Transverse colon (tissue), 4 donors: ENCODE measurements at regions of chr1 and their contacts with region 1.

Region 1: GRCh38 chr1:110319332-110320152 is 19.6 kb upstream of the RBM15 start:
- DNase-seq: no peak
- H3K4me3 ChIP-seq: no peak overlapping the region
- H3K27ac ChIP-seq: no peak overlapping the region
- H3K4me1 ChIP-seq: peaks cover 0 to 8% (median 3%) of the 10 kb centered on the region in 4 donors
- H3K27me3 ChIP-seq: no peaks in the 10 kb centered on the region
- CTCF ChIP-seq: no peak
- EP300 ChIP-seq: no peak
- POLR2A ChIP-seq: no peak

Region 2: GRCh38 chr1:110203021-110203661 is 116.4 kb before region 1 on chr1:
- in situ Hi-C with region 1: loop called in 3 of 4 experiments (anchors 5 kb)
- intact Hi-C with region 1: no loop called
- DNase-seq: peak; percentile 74
- H3K4me3 ChIP-seq: no peak overlapping the region
- H3K27ac ChIP-seq: peak overlapping the region in 3 of 4 donors; percentile 27 to 66 (median 51)
- H3K4me1 ChIP-seq: peaks cover 0 to 12% (median 0%) of the 10 kb centered on the region in 4 donors
- H3K27me3 ChIP-seq: no peaks in the 10 kb centered on the region
- CTCF ChIP-seq: peak; percentile 84 to 94 (median 89)
- EP300 ChIP-seq: no peak
- POLR2A ChIP-seq: no peak

Region 3: GRCh38 chr1:110272045-110272444 is 47.5 kb before region 1 on chr1:
- in situ Hi-C with region 1: no loop called
- intact Hi-C with region 1: loop called (anchors 1 kb)
- DNase-seq: no peak
- H3K4me3 ChIP-seq: no peak overlapping the region
- H3K27ac ChIP-seq: no peak overlapping the region
- H3K4me1 ChIP-seq: no peaks in the 10 kb centered on the region
- H3K27me3 ChIP-seq: no peaks in the 10 kb centered on the region
- CTCF ChIP-seq: no peak
- EP300 ChIP-seq: no peak
- POLR2A ChIP-seq: no peak